Right lobe of liver (tissue), 6 donors: ENCODE measurements at regions of chr6 and their contacts with region 1.

Region 1: GRCh38 chr6:40587240-40588069 is at the start of gene LRFN2:
- DNase-seq: peak; percentile 76 to 84 (median 79)
- ATAC-seq: peak; percentile 96 to 98 (median 98)
- H3K4me3 ChIP-seq: peak within 1 kb of the TSS; percentile 31 to 49 (median 41)
- H3K27ac ChIP-seq: no peak within 1 kb of the TSS
- H3K4me1 ChIP-seq: peaks cover 0 to 12% (median 0%) of the 10 kb centered on the region in 4 donors
- H3K27me3 ChIP-seq: peaks cover 0 to 7% of the 10 kb centered on the region in 2 donors
- CTCF ChIP-seq: peak; percentile 49 to 73 (median 58)
- POLR2A ChIP-seq: no peak
- total RNA-seq, gene LRFN2: 0.19 TPM in 1 of 6 experiments, not detected in the others

Region 2: DNA sequence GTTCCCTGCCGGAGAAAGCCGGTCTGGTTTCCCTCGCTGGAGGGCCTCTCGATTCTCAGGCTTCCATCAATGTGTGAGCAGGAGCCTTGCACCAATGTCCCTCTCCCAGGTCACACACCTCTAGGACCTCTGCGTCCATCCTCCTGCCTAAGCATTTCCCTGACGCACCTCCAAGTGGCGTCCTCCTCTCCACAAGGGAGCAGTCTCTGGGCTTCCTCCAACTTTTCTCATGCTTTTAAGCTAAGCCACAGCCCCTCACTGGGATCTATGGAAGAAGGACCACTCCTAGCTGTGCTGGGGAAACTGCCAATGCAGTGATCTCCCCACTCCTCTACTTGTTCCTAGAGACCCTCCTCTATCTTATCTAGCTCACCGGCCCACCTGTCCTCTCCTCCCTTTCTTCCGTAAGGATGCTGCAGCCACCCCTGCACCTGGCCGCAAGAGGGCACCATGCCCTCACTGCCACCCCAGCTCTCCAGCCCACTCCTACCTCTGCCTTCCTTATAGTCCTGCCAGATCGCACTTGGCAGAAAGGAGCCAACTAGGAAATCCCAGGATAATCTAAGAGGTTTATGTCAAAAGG is 259.0 kb before region 1 on chr6:
- intact Hi-C with region 1: loop called (anchors 5 kb)
- DNase-seq: peak in 2 of 3 donors; percentile 58 to 69
- ATAC-seq: peak; percentile 91 to 97 (median 92)
- H3K4me3 ChIP-seq: no peak overlapping the region
- H3K27ac ChIP-seq: no peak overlapping the region
- H3K4me1 ChIP-seq: no peaks in the 10 kb centered on the region
- H3K27me3 ChIP-seq: no peaks in the 10 kb centered on the region
- CTCF ChIP-seq: peak; percentile 78 to 90 (median 86)
- POLR2A ChIP-seq: no peak

Region 3: DNA sequence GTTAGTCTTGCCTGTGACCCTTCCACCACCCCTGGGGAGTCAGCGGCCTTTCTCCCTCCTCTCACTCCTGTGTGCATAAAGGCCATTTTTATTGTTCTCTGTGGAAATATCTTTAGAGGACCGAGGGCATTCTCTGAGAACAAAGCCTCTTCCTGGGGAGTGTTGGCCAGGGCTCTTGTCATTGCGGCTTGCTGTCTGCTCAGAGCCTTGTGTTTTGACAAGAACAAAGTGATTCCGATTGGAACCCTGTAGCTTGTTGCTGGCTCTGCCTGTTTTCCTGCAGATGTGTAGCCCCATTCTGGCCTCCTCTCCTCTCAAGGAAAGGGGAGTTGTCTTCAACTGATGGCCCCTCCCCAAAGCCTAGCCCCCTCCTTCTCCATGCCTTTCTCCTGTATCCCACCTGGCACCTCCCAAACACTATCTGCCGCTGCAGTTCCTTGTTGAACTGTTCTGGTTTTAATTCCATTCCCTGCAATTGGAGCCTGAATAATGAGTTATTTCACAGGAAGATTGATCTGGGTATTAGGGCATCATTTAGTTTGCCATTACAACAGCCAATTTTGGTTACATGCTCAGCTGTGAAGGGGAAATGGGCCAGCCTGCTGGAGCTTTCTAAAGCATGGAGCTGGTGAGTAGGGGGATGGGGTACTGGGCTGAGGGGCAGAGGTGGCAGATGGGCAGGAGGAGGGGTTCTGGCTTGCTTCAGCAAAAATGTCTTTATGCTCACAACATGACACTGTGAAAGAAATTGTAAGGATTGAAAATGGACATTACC is 252.8 kb before region 1 on chr6:
- intact Hi-C with region 1: loop called (anchors 5 kb)
- DNase-seq: no peak
- ATAC-seq: no peak
- H3K4me3 ChIP-seq: no peak overlapping the region
- H3K27ac ChIP-seq: no peak overlapping the region
- H3K4me1 ChIP-seq: no peaks in the 10 kb centered on the region
- H3K27me3 ChIP-seq: no peaks in the 10 kb centered on the region
- CTCF ChIP-seq: no peak
- POLR2A ChIP-seq: no peak

Region 4: DNA sequence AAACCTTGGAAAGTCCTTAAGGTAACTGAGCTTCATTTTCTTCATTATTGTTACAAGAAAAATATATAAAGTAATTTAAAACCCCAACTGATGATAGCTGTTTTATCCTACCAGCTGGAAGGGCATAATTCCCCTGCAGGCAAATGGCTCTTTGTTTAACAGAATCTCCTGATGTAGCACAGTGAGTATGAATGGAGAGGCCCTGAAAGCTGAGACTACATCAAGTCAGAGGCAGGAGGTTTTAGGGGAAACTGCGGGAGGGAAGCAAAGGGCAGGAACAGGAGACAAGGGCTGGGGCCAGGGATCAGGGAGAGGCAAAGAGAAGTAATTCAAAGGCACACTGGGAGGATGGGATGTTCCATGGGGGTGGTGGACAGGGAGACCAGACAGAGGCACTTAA is 118.7 kb after region 1 on chr6:
- intact Hi-C with region 1: no loop called
- DNase-seq: no peak
- ATAC-seq: no peak
- H3K4me3 ChIP-seq: no peak overlapping the region
- H3K27ac ChIP-seq: no peak overlapping the region
- H3K4me1 ChIP-seq: no peaks in the 10 kb centered on the region
- H3K27me3 ChIP-seq: no peaks in the 10 kb centered on the region
- CTCF ChIP-seq: no peak
- POLR2A ChIP-seq: no peak